ENCODE measurements at regions of chr11 and their contacts with region 1.

Region 1: GRCh38 chr11:3091791-3092602 is 34.8 kb upstream of the CARS1 start:
- DNase-seq: peak; percentile 74 to 84
- H3K4me3 ChIP-seq: no peak overlapping the region
- H3K27ac ChIP-seq: no peak overlapping the region
- H3K4me1 ChIP-seq: peaks cover 0 to 15% (median 7%) of the 10 kb centered on the region in 4 donors
- H3K27me3 ChIP-seq: no peaks in the 10 kb centered on the region
- CTCF ChIP-seq: peak in 6 of 7 experiments; percentile 41 to 100 (median 98)
- EP300 ChIP-seq: no peak
- POLR2A ChIP-seq: no peak

Region 2: DNA sequence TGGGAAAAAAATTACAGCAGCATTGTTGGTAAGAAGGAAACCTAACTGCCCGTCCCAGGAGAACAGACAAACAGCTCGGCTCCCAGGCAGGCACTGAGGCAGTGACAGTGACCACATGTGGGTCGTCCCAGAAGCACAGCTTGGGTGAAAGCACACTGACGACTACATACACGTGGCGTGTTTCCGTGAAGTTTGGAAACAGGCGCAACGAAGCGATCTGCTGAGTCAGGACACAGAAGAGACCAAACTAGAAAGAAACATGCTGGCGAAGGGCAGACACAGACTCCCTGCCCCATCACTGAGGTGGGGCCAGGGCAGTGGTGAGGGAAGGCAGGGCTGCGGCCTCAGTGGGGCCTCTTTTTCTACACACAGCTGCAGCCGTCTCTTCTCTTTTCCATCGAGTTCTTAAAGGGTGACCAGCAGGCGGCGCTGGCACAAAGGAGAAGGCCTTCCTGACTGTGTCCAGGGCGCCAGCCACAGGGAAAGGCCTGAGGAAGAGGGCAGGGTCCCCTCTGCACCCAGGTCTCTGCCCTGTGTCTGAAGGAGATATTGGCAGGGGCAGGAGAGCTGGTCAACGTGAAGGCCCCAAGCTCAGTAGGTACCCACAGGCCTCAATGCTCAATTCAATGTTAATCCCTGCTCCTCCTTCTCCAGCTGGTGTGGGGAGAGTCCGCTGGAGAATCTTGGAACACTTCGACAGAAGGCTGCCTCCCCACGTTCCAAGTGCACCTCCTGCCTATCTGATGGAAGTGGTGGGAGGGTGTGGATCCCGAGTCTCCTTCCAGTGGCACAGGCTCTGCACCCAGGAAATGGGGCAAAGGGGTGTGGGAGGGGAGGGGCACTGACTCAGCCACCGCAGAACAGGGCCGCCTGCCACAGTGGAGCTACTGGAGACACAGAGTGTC is 54.7 kb before region 1 on chr11:
- intact Hi-C with region 1: loop called (anchors 5 kb)
- DNase-seq: peak; percentile 87 to 89
- H3K4me3 ChIP-seq: no peak overlapping the region
- H3K27ac ChIP-seq: peak overlapping the region in 3 of 5 donors; percentile 26 to 56 (median 43)
- H3K4me1 ChIP-seq: peaks cover 8 to 33% (median 10%) of the 10 kb centered on the region in 4 donors
- H3K27me3 ChIP-seq: no peaks in the 10 kb centered on the region
- CTCF ChIP-seq: peak in 5 of 7 experiments; percentile 40 to 77 (median 69)
- EP300 ChIP-seq: no peak
- POLR2A ChIP-seq: no peak

Measured in stomach (tissue), 19 donors.